ENCODE measurements at regions of chr11 and their contacts with region 1.

Region 1: DNA sequence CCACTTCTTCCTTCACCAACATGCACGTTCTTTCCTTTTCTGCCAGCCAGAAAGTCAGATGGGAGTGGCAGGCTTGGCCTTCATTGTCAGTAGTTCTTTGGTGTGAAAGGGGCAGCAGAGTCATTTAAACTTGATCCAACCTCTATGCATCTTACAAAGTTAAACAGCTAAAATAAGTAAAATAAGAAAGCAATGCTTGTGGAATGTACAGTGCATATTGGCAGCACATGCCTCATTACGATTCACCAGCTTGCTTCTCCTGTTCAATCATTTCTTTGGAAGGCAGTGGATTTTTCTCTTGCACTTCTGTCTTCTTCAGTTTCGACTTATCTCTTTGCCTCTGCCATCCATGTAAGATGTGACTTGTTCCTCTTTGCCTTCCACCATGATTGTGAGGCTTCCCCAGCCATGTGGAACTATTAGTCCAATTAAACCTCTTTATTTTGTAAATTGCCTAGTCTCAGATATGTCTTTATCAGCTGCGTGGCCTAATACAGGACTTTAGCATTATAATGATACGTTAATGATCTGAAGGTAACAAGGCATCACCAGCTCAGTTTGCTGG is 14.8 kb downstream of the LGALS12 start:
- DNase-seq: no peak
- H3K4me3 ChIP-seq: no peak overlapping the region
- H3K27ac ChIP-seq: no peak overlapping the region
- H3K4me1 ChIP-seq: no peaks in the 10 kb centered on the region
- H3K27me3 ChIP-seq: no peaks in the 10 kb centered on the region
- CTCF ChIP-seq: no peak
- EP300 ChIP-seq: no peak
- POLR2A ChIP-seq: no peak

Region 2: GRCh38 chr11:63553741-63554151 is 33.1 kb after region 1 on chr11:
- in situ Hi-C with region 1: no loop called
- intact Hi-C with region 1: loop called (anchors 1 kb)
- DNase-seq: no peak
- H3K4me3 ChIP-seq: no peak overlapping the region
- H3K27ac ChIP-seq: peak overlapping the region in 1 of 4 donors; percentile 28
- H3K4me1 ChIP-seq: peaks cover 0 to 20% (median 2%) of the 10 kb centered on the region in 4 donors
- H3K27me3 ChIP-seq: no peaks in the 10 kb centered on the region
- CTCF ChIP-seq: no peak
- EP300 ChIP-seq: no peak
- POLR2A ChIP-seq: no peak

Region 3: DNA sequence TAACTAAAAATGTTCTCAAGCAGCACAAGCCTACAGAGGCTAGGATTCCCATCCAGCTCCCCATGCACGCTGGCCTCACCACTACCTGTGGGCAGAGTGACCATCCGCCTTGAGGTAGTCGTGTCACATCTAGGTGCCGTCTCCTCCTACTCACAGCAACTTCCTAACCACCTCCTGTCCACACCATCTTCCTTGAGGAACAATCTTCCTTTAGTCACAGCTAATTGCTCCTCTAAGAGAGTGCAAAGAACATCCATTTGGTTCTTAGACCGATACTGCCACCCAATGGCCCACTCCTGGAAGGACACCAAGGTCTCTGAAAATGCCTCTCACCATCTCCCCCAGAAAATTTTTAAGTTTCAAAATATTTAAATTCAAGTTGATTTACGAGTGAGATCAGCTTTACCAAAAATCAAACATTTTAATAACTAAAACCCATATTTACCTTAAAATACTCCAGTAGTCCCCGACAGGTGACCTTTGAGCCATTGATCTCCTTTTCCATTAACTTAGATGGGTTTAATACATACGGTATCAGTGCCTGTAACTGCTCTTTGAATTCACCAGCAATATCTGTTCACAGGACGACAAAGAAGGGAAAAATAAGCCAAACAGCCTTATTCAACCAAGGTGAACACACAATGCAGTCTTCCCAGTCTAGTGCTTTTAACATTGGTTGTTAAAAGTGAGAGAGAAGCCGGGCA is 115.2 kb after region 1 on chr11:
- in situ Hi-C with region 1: no loop called
- intact Hi-C with region 1: no loop called
- DNase-seq: peak; percentile 64
- H3K4me3 ChIP-seq: no peak overlapping the region
- H3K27ac ChIP-seq: no peak overlapping the region
- H3K4me1 ChIP-seq: peaks cover 0 to 12% (median 2%) of the 10 kb centered on the region in 4 donors
- H3K27me3 ChIP-seq: no peaks in the 10 kb centered on the region
- CTCF ChIP-seq: peak; percentile 64 to 88 (median 81)
- EP300 ChIP-seq: no peak
- POLR2A ChIP-seq: no peak